Left colon (tissue), 2 donors: ENCODE measurements at regions of chr12 and their contacts with region 1.

Region 1: DNA sequence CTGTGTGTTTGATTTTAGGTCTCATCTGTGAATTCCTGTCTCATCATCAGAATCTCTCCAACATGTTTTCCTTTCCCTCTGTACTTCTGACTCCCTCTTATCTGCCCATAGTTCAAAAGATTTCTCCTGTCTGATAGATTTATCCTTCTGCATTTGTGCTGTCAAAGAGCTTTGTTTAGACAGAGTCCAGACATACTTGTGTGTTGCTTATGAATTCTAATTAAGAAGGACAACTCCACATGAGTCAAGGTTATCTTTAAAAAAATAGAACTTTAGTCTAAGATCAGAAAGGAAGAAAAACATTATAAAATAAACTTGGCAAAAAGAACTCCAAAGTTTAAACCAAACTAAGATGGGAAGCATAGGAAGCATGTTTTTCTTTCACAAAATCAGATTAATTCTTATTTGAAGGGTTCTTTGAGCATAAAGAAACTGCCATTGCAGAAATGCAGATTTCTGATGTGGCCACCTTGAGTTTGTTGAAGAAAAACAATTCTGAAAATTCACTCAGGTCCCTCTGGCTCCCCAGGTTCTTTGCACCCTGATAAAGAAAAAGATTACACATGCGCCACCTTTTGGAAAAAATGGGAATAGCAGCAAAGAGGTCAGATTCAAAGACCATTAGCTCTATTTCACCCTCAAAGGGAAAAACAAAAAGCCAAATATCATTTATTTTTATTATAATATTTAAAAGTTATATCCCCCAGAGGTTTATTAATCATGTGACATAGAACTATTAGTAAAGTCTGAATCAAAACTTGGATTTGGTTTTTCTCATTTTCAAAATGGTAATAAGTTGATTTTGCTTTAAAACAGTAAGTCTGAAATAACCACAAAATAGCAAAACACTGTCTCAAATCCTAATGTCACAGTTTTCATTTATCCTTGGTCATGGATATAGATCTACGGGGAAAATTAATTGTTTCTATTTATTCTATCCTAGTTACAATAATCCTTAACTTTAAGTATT is 143.7 kb upstream of the DCN start:
- DNase-seq: peak in 1 of 2 donors; percentile 7
- ATAC-seq: no peak

Region 2: DNA sequence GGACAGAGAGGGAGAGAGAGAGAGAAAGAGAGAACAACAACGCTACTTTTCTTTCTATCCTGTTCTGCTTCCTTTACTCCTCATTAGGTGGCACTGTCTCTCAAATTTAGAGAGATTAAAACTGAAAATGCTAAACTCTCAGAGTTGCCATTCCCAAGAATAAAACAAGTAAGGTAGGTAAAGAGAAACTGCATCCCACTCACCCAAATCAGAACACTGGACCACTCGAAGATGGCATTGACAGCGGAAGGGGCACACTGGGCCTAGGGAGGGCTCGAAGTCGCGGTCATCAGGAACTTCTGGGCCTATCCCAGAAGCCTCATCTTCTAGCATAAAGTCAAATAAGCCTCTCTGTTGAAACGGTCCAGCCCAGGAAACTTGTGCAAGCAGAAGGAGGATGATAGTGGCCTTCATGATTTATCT is 148.2 kb before region 1 on chr12:
- intact Hi-C with region 1: loop called in 1 of 2 experiments (anchors 5 kb)
- DNase-seq: no peak
- ATAC-seq: peak; percentile 51

Region 3: GRCh38 chr12:91513313-91513712 is 187.0 kb after region 1 on chr12:
- intact Hi-C with region 1: no loop called
- DNase-seq: no peak
- ATAC-seq: no peak